ENCODE measurements at regions of chr4 and their contacts with region 1.

Region 1: DNA sequence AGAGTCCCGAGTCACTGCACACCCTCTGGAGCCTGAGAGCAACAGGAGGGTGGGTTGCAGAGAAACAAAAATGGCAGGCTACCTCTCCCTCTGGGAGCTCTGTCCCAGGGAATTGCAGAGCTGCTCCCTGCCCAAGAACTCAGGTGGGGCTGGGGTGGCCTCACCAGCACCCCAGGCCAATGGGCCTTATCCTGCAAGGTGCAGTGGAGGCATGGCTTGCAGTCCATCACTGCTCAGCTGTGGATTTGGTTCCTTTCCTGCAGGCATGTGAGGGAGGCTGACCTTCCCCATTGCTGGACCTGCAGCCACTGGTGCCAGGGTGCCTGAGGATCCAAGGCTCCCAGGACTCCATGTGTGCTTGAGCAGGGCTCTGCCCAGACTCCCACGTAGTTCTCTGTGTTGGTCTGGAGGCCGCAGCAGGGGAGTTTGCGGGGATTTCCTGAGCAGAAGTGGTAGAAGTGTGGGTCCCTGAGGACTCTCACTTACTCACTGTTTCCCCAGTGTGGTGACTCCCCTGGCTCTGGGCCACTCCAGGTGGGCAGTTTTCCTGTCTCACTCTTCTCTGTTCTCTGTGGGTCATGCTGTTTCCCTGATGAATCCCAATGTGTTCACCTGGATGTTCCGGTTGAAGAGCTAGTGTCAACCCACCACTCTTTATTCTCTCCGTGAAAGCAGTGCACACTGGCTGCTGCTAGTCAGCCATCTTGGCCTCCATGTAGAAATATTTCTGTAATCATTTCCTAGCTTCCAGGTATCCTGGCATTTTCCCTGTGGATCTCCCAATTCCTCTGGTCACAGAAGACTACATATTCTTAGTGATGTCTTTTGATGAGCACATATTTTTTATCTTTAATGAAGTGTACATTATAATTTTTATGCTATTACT is 82.3 kb downstream of the ARHGAP24 start:
- DNase-seq: peak; percentile 93
- ATAC-seq: peak; percentile 86
- H3K4me3 ChIP-seq: peak overlapping the region in 2 of 5 experiments; percentile 12 to 14
- H3K4me3 Mint-ChIP-seq: peak overlapping the region; percentile 66
- H3K27ac ChIP-seq: peak overlapping the region; percentile 92 to 95
- H3K27ac Mint-ChIP-seq: peak overlapping the region; percentile 96
- H3K4me1 ChIP-seq: peaks cover 61 to 62% of the 10 kb centered on the region in 2 donors
- H3K4me1 Mint-ChIP-seq: peaks cover 72% of the 10 kb centered on the region
- H3K27me3 ChIP-seq: no peaks in the 10 kb centered on the region
- H3K27me3 Mint-ChIP-seq: no peaks in the 10 kb centered on the region
- CTCF ChIP-seq: no peak

Region 2: GRCh38 chr4:85370430-85371032 is 186.7 kb before region 1 on chr4:
- CTCF ChIA-PET with region 1: interaction called, 3 read pairs
- POLR2A ChIA-PET with region 1: no interaction called
- intact Hi-C with region 1: loop called (anchors 2 kb)
- DNase-seq: peak; percentile 75
- ATAC-seq: peak; percentile 82
- H3K4me3 ChIP-seq: no peak overlapping the region
- H3K4me3 Mint-ChIP-seq: peak overlapping the region; percentile 52
- H3K27ac ChIP-seq: peak overlapping the region; percentile 31 to 39
- H3K27ac Mint-ChIP-seq: peak overlapping the region; percentile 77
- H3K4me1 ChIP-seq: peaks cover 24 to 26% of the 10 kb centered on the region in 2 donors
- H3K4me1 Mint-ChIP-seq: peaks cover 28% of the 10 kb centered on the region
- H3K27me3 ChIP-seq: no peaks in the 10 kb centered on the region
- H3K27me3 Mint-ChIP-seq: no peaks in the 10 kb centered on the region
- CTCF ChIP-seq: peak; percentile 78

Region 3: DNA sequence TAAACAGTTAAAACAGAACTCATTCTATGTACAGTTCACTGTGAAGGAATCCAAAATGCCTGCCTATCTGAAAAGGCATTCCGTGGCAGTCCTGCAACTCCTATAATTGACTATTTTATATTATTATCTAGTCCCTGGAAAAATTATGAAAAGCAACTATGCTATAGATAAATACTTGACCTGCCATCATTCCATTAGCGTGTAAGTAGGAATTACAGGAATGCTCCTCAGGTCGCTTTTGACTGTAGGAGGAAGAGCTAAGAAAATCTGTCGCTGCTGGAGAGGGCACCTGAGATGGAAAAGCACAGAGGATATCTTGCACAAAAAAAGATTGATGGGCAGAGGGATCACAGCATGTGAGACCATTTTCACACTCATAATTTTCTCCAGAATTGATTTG is 20.8 kb after region 1 on chr4:
- CTCF ChIA-PET with region 1: no interaction called
- POLR2A ChIA-PET with region 1: no interaction called
- intact Hi-C with region 1: no loop called
- DNase-seq: no peak
- ATAC-seq: no peak
- H3K4me3 ChIP-seq: no peak overlapping the region
- H3K4me3 Mint-ChIP-seq: no peak overlapping the region
- H3K27ac ChIP-seq: no peak overlapping the region
- H3K27ac Mint-ChIP-seq: no peak overlapping the region
- H3K4me1 ChIP-seq: no peaks in the 10 kb centered on the region
- H3K4me1 Mint-ChIP-seq: peaks cover 7% of the 10 kb centered on the region
- H3K27me3 ChIP-seq: no peaks in the 10 kb centered on the region
- H3K27me3 Mint-ChIP-seq: no peaks in the 10 kb centered on the region
- CTCF ChIP-seq: no peak

Region 4: GRCh38 chr4:85603437-85604336 is 46.4 kb after region 1 on chr4:
- CTCF ChIA-PET with region 1: no interaction called
- POLR2A ChIA-PET with region 1: no interaction called
- intact Hi-C with region 1: loop called (anchors 2 kb)
- DNase-seq: peak; percentile 72
- ATAC-seq: peak; percentile 42
- H3K4me3 ChIP-seq: peak overlapping the region in 1 of 5 experiments; percentile 6
- H3K4me3 Mint-ChIP-seq: peak overlapping the region; percentile 62
- H3K27ac ChIP-seq: peak overlapping the region; percentile 60 to 91
- H3K27ac Mint-ChIP-seq: peak overlapping the region; percentile 86
- H3K4me1 ChIP-seq: peaks cover 45 to 46% of the 10 kb centered on the region in 2 donors
- H3K4me1 Mint-ChIP-seq: peaks cover 40% of the 10 kb centered on the region
- H3K27me3 ChIP-seq: no peaks in the 10 kb centered on the region
- H3K27me3 Mint-ChIP-seq: no peaks in the 10 kb centered on the region
- CTCF ChIP-seq: no peak

Region 5: DNA sequence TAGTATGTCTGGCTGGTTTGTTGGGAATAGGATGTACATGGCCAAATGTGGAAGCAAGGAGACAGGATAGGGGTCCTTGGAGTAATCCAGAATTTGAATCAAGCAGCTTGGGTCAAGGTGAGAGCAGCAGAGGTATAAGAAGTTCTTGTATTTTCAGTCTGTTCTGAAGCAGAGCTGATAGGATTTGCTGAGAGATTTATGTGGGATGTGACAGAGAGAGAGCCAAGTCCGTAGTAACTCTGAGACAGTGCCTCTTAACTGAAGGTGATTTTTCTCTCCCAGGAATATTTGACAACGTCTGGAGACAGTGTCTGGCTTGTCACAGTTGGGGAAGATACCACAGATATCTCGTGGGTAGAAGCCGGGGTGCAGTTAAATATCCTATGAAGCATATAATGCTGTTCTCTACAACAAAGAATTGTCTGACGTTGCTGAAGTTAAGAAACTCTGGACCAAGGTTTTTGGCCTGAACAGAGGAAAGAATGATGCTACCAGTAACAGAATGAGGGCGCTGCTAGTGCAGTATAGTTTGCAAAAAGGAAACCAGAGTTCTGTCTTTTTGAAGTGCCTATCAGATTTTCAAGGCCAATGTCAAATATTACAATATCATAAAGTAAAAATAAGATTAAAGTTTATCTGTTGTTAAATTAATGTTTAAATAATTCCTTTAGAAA is 101.6 kb after region 1 on chr4:
- CTCF ChIA-PET with region 1: no interaction called
- POLR2A ChIA-PET with region 1: no interaction called
- intact Hi-C with region 1: loop called (anchors 2 kb)
- DNase-seq: peak; percentile 50
- ATAC-seq: peak; percentile 23
- H3K4me3 ChIP-seq: no peak overlapping the region
- H3K4me3 Mint-ChIP-seq: peak overlapping the region; percentile 59
- H3K27ac ChIP-seq: peak overlapping the region; percentile 62 to 81
- H3K27ac Mint-ChIP-seq: peak overlapping the region; percentile 86
- H3K4me1 ChIP-seq: peaks cover 38 to 46% of the 10 kb centered on the region in 2 donors
- H3K4me1 Mint-ChIP-seq: peaks cover 45% of the 10 kb centered on the region
- H3K27me3 ChIP-seq: no peaks in the 10 kb centered on the region
- H3K27me3 Mint-ChIP-seq: no peaks in the 10 kb centered on the region
- CTCF ChIP-seq: peak; percentile 16

Region 6: DNA sequence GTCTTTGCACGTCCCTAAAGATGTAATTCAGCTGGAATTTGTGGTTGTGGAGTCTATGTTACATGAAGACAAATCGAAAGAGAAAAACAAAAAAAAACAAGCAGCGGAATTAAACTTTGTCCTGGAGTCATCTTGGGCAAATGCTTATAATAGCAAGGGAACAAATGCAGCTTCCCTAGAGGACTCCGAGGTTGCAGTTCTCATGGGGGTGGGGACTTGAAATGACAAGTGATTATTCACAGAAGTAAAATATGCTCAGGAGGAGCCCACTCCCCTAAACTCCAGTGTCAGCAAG is 280.1 kb after region 1 on chr4:
- CTCF ChIA-PET with region 1: no interaction called
- POLR2A ChIA-PET with region 1: no interaction called
- intact Hi-C with region 1: loop called (anchors 5 kb)
- DNase-seq: no peak
- ATAC-seq: no peak
- H3K4me3 ChIP-seq: no peak overlapping the region
- H3K4me3 Mint-ChIP-seq: no peak overlapping the region
- H3K27ac ChIP-seq: no peak overlapping the region
- H3K27ac Mint-ChIP-seq: peak overlapping the region; percentile 27
- H3K4me1 ChIP-seq: peaks cover 6 to 9% of the 10 kb centered on the region in 2 donors
- H3K4me1 Mint-ChIP-seq: peaks cover 35% of the 10 kb centered on the region
- H3K27me3 ChIP-seq: no peaks in the 10 kb centered on the region
- H3K27me3 Mint-ChIP-seq: no peaks in the 10 kb centered on the region
- CTCF ChIP-seq: no peak